Ovary (tissue), 10 donors: ENCODE measurements at regions of chr4 and their contacts with region 1.

Region 1: GRCh38 chr4:163544407-163545038 is 50.0 kb downstream of the TMA16 start:
- DNase-seq: peak in 4 of 5 donors; percentile 50 to 60 (median 52)
- H3K4me3 ChIP-seq: no peak overlapping the region
- H3K27ac ChIP-seq: no peak overlapping the region
- H3K4me1 ChIP-seq: no peaks in the 10 kb centered on the region
- H3K27me3 ChIP-seq: no peaks in the 10 kb centered on the region
- CTCF ChIP-seq: peak; percentile 39 to 50 (median 49)
- EP300 ChIP-seq: no peak
- POLR2A ChIP-seq: no peak

Region 2: GRCh38 chr4:163484906-163485305 is 59.6 kb before region 1 on chr4:
- intact Hi-C with region 1: loop called in 3 of 4 experiments (anchors 5 to 10 kb)
- DNase-seq: peak in 3 of 5 donors; percentile 25 to 36 (median 31)
- H3K4me3 ChIP-seq: no peak overlapping the region
- H3K27ac ChIP-seq: no peak overlapping the region
- H3K4me1 ChIP-seq: no peaks in the 10 kb centered on the region
- H3K27me3 ChIP-seq: no peaks in the 10 kb centered on the region
- CTCF ChIP-seq: peak in 1 of 3 donors; percentile 31
- EP300 ChIP-seq: no peak
- POLR2A ChIP-seq: no peak

Region 3: DNA sequence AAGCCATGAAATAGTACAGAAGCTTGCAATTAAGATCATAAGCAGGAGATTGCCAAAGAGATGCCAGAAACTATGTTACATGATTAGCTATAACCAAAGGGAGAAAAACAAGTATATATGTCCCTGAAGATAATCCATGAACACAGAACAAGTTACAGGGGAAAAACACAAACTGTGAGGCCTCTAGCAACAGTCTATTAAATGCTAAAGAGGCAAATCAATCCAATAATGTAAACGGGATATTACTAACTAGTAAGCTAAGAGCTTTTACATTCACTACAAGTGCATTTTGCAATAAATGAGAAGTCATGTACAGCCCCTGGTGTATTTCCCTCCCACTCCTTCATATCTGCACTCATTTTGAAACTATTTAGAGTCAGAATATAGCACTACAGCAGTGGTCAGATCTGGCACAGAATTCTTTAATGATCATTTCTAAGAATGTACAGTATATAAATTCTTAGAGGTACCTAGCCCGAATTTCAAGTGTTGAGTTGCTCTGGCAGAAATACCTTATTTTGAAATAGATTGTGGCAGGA is 759.6 kb after region 1 on chr4:
- intact Hi-C with region 1: no loop called
- DNase-seq: no peak
- H3K4me3 ChIP-seq: no peak overlapping the region
- H3K27ac ChIP-seq: no peak overlapping the region
- H3K4me1 ChIP-seq: no peaks in the 10 kb centered on the region
- H3K27me3 ChIP-seq: no peaks in the 10 kb centered on the region
- CTCF ChIP-seq: no peak
- EP300 ChIP-seq: no peak
- POLR2A ChIP-seq: no peak